Activated CD4-positive, alpha-beta T cell treated with anti-CD3 and anti-CD28 coated beads, Interleukin-2, amount 10 ng/mL, durations not matched to agents 24 days and 14 days (primary cell): ENCODE measurements at regions of chr22 and their contacts with region 1.

Region 1: DNA sequence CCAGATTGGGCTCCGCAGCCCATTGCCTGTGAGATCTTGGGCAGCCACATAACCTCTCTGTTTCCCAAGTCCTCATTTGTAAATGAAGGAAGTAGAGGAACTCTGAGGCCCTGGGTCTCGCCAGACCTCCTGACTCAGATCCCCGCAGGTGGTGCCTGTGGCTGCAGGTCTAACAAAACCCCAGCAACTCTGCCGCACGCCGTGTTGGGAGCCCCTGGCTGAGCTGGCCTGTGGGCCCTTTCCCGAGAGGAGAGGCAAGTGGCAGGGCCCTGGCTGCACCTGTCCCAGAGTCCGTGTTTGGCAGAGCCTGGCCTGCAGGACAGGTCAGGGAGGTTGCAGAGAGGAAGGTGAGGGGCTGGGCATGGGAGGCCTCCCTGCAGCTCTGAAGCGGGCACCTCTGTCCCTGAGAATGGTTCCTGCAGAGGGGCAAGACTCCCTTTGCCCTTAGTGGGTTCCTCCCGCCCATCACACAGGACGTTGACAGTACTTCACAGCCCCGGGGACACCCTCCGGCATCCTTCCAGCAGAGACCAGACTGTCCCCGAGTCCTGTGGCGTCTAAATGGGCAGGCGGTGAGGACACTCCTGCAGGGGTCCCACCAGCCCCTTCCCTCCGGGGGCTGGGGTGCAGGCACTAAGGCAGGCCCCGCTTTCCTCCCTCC is 67.7 kb downstream of the ARHGAP8 start:
- DNase-seq: no peak
- H3K4me3 Mint-ChIP-seq: no peak overlapping the region
- H3K27ac Mint-ChIP-seq: no peak overlapping the region
- H3K4me1 Mint-ChIP-seq: no peaks in the 10 kb centered on the region
- H3K27me3 Mint-ChIP-seq: no peaks in the 10 kb centered on the region

Region 2: GRCh38 chr22:45096256-45096907 is 276.3 kb after region 1 on chr22:
- intact Hi-C with region 1: loop called (anchors 1 kb)
- DNase-seq: peak; percentile 85
- H3K4me3 Mint-ChIP-seq: no peak overlapping the region
- H3K27ac Mint-ChIP-seq: no peak overlapping the region
- H3K4me1 Mint-ChIP-seq: no peaks in the 10 kb centered on the region
- H3K27me3 Mint-ChIP-seq: peaks cover 13% of the 10 kb centered on the region